OCI-LY7 (cell line): ENCODE measurements at regions of chr1 and their contacts with region 1.

Region 1: DNA sequence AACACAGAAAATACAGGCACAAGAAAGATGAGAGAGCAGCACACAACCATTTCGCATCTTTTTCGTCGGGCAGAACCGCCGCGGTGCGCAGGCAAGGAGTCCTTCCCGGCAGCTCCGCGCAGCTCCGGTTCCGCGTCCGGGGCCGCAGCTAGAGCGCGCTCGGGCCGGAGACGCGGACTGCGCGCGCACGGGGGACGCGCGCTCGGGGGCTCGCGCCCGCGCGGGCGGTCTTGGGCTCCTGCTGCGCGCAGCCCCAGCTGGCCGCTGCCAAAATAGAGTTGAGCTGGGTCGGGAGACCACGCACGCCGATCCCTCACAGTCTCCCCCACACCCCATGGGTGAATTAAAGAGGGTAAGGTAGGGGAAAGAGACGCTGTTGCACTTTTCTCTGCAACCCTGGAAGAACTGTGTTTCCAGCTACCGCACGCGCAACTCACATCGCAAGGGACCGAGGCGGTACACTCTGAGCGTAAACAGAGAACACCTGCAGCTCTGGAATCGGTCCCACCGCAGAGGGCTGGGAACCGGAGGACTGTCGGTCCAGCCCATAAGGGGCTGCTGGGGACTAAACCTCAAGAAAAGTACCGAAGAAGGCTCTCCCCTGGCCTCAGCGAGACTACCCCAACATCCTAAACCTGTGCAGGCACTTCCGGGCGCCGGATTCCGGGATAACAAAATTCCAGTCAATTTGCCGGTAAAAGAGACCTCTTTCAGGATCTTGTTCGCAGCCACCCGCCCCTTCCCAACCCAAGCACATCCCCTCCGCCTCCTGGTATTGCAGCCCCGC is 1.7 kb downstream of the NR5A2 start:
- DNase-seq: peak; percentile 88
- H3K4me3 ChIP-seq: peak overlapping the region; percentile 73
- H3K27ac ChIP-seq: peak overlapping the region; percentile 13
- H3K4me1 ChIP-seq: peaks cover 32% of the 10 kb centered on the region
- CTCF ChIP-seq: no peak

Region 2: GRCh38 chr1:199102239-199102638 is 927.0 kb before region 1 on chr1:
- CTCF ChIA-PET with region 1: no interaction called
- POLR2A ChIA-PET with region 1: no interaction called
- intact Hi-C with region 1: no loop called
- DNase-seq: no peak
- H3K4me3 ChIP-seq: no peak overlapping the region
- H3K27ac ChIP-seq: no peak overlapping the region
- H3K4me1 ChIP-seq: no peaks in the 10 kb centered on the region
- CTCF ChIP-seq: no peak

Region 3: DNA sequence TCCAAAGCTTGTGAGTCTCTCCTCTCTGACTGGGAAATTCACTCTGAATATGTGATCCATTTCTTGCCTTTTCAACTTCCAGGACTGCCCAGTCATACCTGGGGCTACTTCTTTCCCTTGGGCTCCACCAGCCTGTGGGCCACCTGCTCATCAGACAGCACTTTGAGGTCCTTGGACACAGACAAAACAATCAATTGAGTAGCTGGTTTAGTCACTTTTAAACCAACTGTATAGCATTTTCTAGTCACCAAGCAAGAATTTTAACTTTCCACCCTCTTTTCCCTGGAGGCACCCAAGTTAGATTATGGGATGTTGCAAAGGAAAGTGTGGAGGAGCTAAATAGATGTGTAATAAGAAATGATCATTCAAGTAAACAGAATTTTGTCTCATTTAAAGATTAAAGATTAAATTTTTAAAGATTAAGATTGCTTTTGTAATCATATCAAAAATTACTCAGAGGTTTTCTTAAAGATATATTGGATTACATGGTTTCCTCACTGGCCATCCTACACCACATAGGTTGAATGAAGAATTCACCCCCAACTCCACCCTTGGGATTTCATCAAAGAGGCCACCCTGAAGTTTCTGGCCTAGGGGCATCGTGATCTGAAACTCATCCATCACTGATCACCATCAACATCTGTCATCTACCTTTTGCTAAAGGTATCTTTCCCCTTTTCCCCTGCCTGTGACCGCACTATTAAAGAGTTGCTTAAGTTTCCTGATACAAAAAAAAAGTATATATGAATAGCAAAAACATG is 220.9 kb before region 1 on chr1:
- CTCF ChIA-PET with region 1: no interaction called
- POLR2A ChIA-PET with region 1: no interaction called
- intact Hi-C with region 1: no loop called
- DNase-seq: no peak
- H3K4me3 ChIP-seq: no peak overlapping the region
- H3K27ac ChIP-seq: no peak overlapping the region
- H3K4me1 ChIP-seq: no peaks in the 10 kb centered on the region
- CTCF ChIP-seq: no peak

Region 4: DNA sequence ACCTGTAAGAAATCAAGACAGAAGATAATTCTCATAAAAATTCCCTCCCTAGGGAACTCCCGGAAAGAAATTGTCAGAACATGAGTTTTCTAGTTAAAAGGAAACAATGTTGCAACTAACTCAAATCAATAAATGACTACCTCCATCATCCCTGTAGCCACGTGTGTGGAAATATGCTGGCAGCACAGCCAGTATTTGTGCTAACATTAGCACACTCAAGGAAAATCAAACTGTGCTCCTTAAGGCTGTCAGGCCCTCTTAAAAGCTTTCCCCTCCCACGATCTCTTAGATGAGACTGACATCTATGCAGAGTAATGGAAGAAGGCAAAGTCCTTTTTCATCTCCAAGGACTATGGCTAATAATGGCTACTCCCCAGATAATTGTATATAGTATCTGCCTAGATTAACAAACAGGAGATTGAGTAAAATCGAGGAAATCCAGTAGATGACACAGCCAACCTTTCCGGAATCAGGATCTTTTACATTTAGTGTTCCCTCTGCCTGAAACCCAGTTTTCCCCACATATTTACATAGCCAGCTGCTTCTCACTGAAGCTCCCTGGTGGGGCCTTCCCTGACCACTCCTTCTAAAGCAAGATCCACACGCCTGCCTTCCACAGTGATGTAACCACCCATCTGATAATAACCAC is 52.6 kb before region 1 on chr1:
- CTCF ChIA-PET with region 1: no interaction called
- POLR2A ChIA-PET with region 1: interaction called, 52 read pairs
- intact Hi-C with region 1: loop called (anchors 1 kb)
- DNase-seq: peak; percentile 18
- H3K4me3 ChIP-seq: peak overlapping the region; percentile 31
- H3K27ac ChIP-seq: peak overlapping the region; percentile 98
- H3K4me1 ChIP-seq: peaks cover 60% of the 10 kb centered on the region
- CTCF ChIP-seq: no peak

Region 5: DNA sequence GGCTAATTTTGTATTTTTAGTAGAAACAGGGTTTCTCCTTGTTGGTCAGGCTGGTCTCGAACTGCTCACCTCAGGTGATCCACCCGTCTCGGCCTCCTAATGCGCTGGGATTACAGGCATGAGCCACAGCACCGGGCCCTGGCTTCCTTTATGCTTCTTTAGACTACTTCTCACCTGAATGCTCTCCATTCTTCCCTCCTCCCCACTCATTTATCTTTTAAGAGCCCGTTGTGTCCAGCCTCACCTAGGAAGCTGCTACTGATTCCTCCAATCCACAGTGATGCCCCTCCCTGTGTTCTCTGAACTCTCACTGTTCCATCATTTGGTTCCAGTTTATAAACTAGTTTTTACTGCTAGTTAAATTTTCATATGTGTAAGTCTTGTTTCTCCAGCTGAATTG is 46.6 kb before region 1 on chr1:
- CTCF ChIA-PET with region 1: interaction called, 3 read pairs
- POLR2A ChIA-PET with region 1: interaction called, 52 read pairs
- intact Hi-C with region 1: loop called (anchors 1 kb)
- DNase-seq: no peak
- H3K4me3 ChIP-seq: no peak overlapping the region
- H3K27ac ChIP-seq: no peak overlapping the region
- H3K4me1 ChIP-seq: peaks cover 43% of the 10 kb centered on the region
- CTCF ChIP-seq: no peak

Region 6: DNA sequence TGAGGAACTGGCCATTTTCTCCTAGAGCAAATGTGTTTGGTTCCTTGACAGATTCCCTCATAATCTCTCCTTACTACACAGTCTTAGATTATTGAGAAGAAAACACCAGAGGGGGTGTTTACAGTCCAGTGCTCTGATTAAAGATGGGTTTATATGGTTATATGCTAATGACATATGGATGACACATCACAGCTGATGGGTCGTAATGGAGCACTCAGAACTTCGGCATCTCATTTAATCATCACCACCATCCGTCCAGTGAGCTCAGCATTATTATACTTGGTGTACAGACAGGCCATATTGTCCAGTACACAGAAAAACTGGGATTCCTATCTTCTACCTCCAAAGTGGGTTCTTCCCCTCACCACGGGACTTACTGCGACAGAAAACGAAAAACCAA is 24.1 kb before region 1 on chr1:
- CTCF ChIA-PET with region 1: no interaction called
- POLR2A ChIA-PET with region 1: interaction called, 18 read pairs
- intact Hi-C with region 1: no loop called
- DNase-seq: no peak
- H3K4me3 ChIP-seq: no peak overlapping the region
- H3K27ac ChIP-seq: no peak overlapping the region
- H3K4me1 ChIP-seq: no peaks in the 10 kb centered on the region
- CTCF ChIP-seq: no peak

Region 7: GRCh38 chr1:200015811-200016210 is 13.4 kb before region 1 on chr1:
- CTCF ChIA-PET with region 1: no interaction called
- POLR2A ChIA-PET with region 1: interaction called, 32 read pairs
- intact Hi-C with region 1: no loop called
- DNase-seq: no peak
- H3K4me3 ChIP-seq: no peak overlapping the region
- H3K27ac ChIP-seq: no peak overlapping the region
- H3K4me1 ChIP-seq: no peaks in the 10 kb centered on the region
- CTCF ChIP-seq: no peak

Region 8: DNA sequence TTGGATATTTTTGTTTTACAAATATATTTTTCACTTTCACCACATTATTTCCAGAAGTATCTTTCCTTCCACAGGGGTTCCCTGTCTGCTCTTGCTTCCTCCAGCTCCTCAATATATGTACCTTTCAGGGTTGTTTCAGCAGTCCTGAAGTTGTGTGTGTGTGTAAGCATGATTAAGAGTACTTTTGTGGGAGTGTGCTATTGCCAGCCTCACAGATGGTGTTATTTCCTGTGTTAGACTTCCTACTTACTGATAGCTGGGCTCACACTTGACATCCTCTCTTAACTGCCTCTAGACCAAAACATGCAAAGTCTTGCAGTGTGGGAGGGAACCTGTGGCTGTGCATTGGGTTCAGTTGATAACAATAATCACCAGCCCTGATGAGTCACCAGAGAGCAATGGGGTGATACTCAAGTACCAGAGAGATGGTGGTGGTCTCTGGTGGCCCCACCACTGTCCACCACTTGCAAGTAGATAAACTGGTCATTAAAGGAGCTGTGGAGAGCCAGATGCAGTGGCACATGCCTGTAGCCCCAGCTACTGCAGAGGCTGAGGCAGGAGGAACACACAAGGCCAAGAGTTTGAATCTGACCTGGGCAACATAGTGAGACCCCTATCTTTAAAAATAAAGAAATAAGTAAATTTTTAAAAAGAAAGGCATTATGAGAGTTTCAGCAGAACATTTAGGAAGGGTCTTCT is 125.0 kb after region 1 on chr1:
- CTCF ChIA-PET with region 1: no interaction called
- POLR2A ChIA-PET with region 1: no interaction called
- intact Hi-C with region 1: loop called (anchors 5 kb)
- DNase-seq: peak; percentile 93
- H3K4me3 ChIP-seq: peak overlapping the region; percentile 41
- H3K27ac ChIP-seq: peak overlapping the region; percentile 89
- H3K4me1 ChIP-seq: peaks cover 56% of the 10 kb centered on the region
- CTCF ChIP-seq: no peak

Region 9: GRCh38 chr1:200217709-200218108 is 188.5 kb after region 1 on chr1:
- CTCF ChIA-PET with region 1: no interaction called
- POLR2A ChIA-PET with region 1: no interaction called
- intact Hi-C with region 1: no loop called
- DNase-seq: no peak
- H3K4me3 ChIP-seq: no peak overlapping the region
- H3K27ac ChIP-seq: no peak overlapping the region
- H3K4me1 ChIP-seq: peaks cover 4% of the 10 kb centered on the region
- CTCF ChIP-seq: no peak